Mammary epithelial cell (primary cell): ENCODE measurements at regions of chr15 and their contacts with region 1.

Region 1: GRCh38 chr15:83283138-83283812 is 1.2 kb downstream of the BNC1 start:
- DNase-seq: no peak
- H3K4me3 ChIP-seq: peak overlapping the region; percentile 62 to 95 (median 63)
- H3K27ac ChIP-seq: peak overlapping the region; percentile 94
- H3K4me1 ChIP-seq: peaks cover 60% of the 10 kb centered on the region
- H3K27me3 ChIP-seq: no peaks in the 10 kb centered on the region
- CTCF ChIP-seq: no peak

Region 2: DNA sequence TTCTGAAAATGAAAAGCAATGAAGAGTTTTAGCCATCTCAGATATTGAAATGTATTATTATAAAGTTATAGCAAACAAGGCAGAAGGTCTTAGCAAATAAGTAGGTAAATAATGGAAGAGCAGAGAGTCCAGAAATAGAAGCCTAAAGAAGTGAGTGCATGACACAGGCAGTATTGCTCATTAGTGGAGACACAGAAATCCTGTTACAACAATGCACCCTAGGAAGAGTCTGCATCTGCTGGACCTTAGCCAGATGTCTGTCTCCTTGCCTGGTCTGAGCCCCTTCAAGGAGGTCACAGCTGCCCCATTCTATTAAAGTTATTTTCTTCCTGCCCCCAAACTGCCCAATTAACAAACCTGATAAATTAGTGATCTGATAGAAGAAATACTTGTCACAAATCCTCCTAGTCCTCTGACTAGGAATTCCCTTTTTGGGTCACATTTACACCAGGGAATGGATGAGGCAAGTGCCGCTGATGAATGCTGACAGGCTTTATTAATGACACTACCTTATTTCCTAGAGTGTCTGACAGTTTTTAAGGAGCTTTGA is 382.7 kb before region 1 on chr15:
- CTCF ChIA-PET with region 1: no interaction called
- dilution Hi-C with region 1: no loop called
- in situ Hi-C with region 1: no loop called
- intact Hi-C with region 1: no loop called
- DNase-seq: peak; percentile 11
- H3K4me3 ChIP-seq: no peak overlapping the region
- H3K27ac ChIP-seq: no peak overlapping the region
- H3K4me1 ChIP-seq: no peaks in the 10 kb centered on the region
- H3K27me3 ChIP-seq: no peaks in the 10 kb centered on the region
- CTCF ChIP-seq: no peak

Region 3: DNA sequence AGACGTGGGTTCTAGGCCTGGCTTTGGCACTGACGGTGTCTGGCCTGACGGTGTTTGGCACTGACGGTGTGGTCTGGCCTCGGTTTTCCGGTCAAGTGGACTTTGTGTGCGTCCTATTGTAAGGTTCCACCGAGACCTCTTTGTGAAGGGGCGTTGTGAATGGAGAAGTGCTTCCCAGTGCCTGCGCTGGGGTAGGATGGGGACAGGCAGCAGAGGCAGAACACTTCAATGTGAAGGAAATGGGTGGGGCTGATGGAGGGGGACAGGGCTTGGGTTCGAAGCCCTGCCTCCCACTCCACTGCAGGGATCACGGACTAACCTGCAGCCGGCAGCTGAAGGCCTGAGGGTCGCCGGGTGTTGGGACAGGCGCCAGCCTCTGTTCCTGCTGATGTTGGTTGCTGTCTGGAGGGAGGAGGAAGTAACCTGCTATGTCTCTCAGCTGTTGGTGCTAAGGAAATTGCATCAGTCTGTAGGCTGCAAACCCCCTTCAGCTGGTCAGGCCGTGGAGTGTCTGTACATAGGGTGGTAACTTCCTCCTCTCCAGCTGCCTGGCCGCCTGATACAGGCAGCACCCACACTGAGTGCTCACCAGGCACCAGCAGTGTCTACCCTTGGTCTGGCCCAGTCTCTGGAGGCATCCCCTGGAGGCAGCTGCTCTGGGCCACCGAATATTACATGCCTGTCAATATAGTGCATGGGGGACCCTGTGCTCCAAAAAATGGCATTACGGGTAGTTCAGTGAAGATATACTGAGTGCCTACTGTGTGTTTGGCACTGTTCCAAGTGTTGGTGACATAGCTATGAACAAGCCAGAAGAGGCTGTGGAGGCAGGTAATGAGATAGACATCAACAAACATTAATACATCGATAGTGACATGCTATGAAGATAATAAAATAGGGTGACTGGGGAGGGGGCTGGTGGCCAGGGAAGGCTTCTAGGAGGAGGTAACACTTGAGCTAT is 174.7 kb before region 1 on chr15:
- CTCF ChIA-PET with region 1: no interaction called
- dilution Hi-C with region 1: no loop called
- in situ Hi-C with region 1: no loop called
- intact Hi-C with region 1: no loop called
- DNase-seq: no peak
- H3K4me3 ChIP-seq: no peak overlapping the region
- H3K27ac ChIP-seq: no peak overlapping the region
- H3K4me1 ChIP-seq: peaks cover 12% of the 10 kb centered on the region
- H3K27me3 ChIP-seq: peaks cover 12% of the 10 kb centered on the region
- CTCF ChIP-seq: no peak

Region 4: GRCh38 chr15:83207622-83208411 is 75.5 kb before region 1 on chr15 and contains the start of gene HDGFL3:
- CTCF ChIA-PET with region 1: interaction called, 5 read pairs
- dilution Hi-C with region 1: no loop called
- in situ Hi-C with region 1: no loop called
- intact Hi-C with region 1: loop called (anchors 5 kb)
- DNase-seq: peak; percentile 57
- H3K4me3 ChIP-seq: peak within 1 kb of the TSS; percentile 84 to 88 (median 85)
- H3K27ac ChIP-seq: peak within 1 kb of the TSS; percentile 61
- H3K4me1 ChIP-seq: peaks cover 26% of the 10 kb centered on the region
- H3K27me3 ChIP-seq: no peaks in the 10 kb centered on the region
- CTCF ChIP-seq: peak in 1 of 2 donors; percentile 27
- total RNA-seq, gene HDGFL3: 22.7 to 79.2 TPM

Region 5: GRCh38 chr15:83305704-83306291 is 22.5 kb after region 1 on chr15:
- CTCF ChIA-PET with region 1: no interaction called
- dilution Hi-C with region 1: no loop called
- in situ Hi-C with region 1: no loop called
- intact Hi-C with region 1: loop called (anchors 2 kb)
- DNase-seq: peak; percentile 83
- H3K4me3 ChIP-seq: no peak overlapping the region
- H3K27ac ChIP-seq: peak overlapping the region; percentile 93
- H3K4me1 ChIP-seq: peaks cover 45% of the 10 kb centered on the region
- H3K27me3 ChIP-seq: no peaks in the 10 kb centered on the region
- CTCF ChIP-seq: no peak

Region 6: DNA sequence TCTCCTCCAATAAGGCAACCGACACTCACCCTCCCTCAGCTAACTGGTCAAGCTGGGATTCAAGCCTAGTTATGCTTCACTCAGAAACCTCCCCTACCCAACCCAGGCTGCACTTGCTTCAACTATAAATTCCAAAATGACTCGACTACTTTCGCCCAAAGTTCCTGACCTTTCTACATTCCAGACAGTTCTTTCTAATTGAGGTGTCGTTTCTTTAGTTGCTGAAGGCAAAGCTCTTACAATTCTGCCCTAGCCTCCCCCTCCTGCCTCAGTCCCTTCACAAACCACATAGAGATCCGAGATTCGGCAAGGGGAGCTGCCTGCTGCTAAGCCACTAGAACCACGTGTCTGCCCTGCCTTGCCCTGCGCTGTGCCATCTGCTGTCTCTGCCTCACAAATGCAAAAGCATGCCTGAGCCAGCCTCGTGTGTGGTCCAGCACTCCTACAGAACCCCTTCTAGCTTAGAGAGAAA is 89.2 kb after region 1 on chr15:
- CTCF ChIA-PET with region 1: no interaction called
- dilution Hi-C with region 1: no loop called
- in situ Hi-C with region 1: loop called (anchors 10 kb)
- intact Hi-C with region 1: no loop called
- DNase-seq: peak; percentile 69
- H3K4me3 ChIP-seq: no peak overlapping the region
- H3K27ac ChIP-seq: no peak overlapping the region
- H3K4me1 ChIP-seq: peaks cover 19% of the 10 kb centered on the region
- H3K27me3 ChIP-seq: no peaks in the 10 kb centered on the region
- CTCF ChIP-seq: peak in 1 of 2 donors; percentile 4

Region 7: GRCh38 chr15:83436458-83437158 is 153.3 kb after region 1 on chr15:
- CTCF ChIA-PET with region 1: interaction called, 5 read pairs
- dilution Hi-C with region 1: no loop called
- in situ Hi-C with region 1: no loop called
- intact Hi-C with region 1: loop called (anchors 1 kb)
- DNase-seq: peak; percentile 61
- H3K4me3 ChIP-seq: no peak overlapping the region
- H3K27ac ChIP-seq: no peak overlapping the region
- H3K4me1 ChIP-seq: no peaks in the 10 kb centered on the region
- H3K27me3 ChIP-seq: no peaks in the 10 kb centered on the region
- CTCF ChIP-seq: peak; percentile 64 to 70